WTC11 (cell line): ENCODE measurements at regions of chr20 and their contacts with region 1.

Region 1: GRCh38 chr20:21235484-21236445 is 67.4 kb upstream of the XRN2 start:
- DNase-seq: peak; percentile 76
- ATAC-seq: peak; percentile 82
- H3K4me3 Mint-ChIP-seq: peak overlapping the region; percentile 54
- H3K27ac Mint-ChIP-seq: no peak overlapping the region; the same call in 1 of the 2 replicates
- H3K4me1 Mint-ChIP-seq: peaks cover 33% of the 10 kb centered on the region
- H3K27me3 Mint-ChIP-seq: no peaks in the 10 kb centered on the region
- CTCF ChIP-seq: peak; percentile 93

Region 2: GRCh38 chr20:20843982-20844381 is 391.8 kb before region 1 on chr20:
- CTCF ChIA-PET with region 1: interaction called, 15 read pairs
- POLR2A ChIA-PET with region 1: no interaction called
- DNase-seq: peak; percentile 58
- ATAC-seq: peak; percentile 98
- H3K4me3 Mint-ChIP-seq: no peak overlapping the region
- H3K27ac Mint-ChIP-seq: no peak overlapping the region
- H3K4me1 Mint-ChIP-seq: no peaks in the 10 kb centered on the region
- H3K27me3 Mint-ChIP-seq: no peaks in the 10 kb centered on the region; the same call in none of the 2 replicates
- CTCF ChIP-seq: no peak

Region 3: GRCh38 chr20:21048841-21049273 is 186.9 kb before region 1 on chr20:
- CTCF ChIA-PET with region 1: interaction called, 11 read pairs
- POLR2A ChIA-PET with region 1: no interaction called
- DNase-seq: peak; percentile 88
- ATAC-seq: peak; percentile 88
- H3K4me3 Mint-ChIP-seq: no peak overlapping the region
- H3K27ac Mint-ChIP-seq: no peak overlapping the region
- H3K4me1 Mint-ChIP-seq: peaks cover 18% of the 10 kb centered on the region
- H3K27me3 Mint-ChIP-seq: no peaks in the 10 kb centered on the region
- CTCF ChIP-seq: peak; percentile 85

Region 4: GRCh38 chr20:21189761-21190523 is 45.8 kb before region 1 on chr20:
- CTCF ChIA-PET with region 1: interaction called, 24 read pairs
- POLR2A ChIA-PET with region 1: interaction called, 6 read pairs
- DNase-seq: peak; percentile 51
- ATAC-seq: peak; percentile 84
- H3K4me3 Mint-ChIP-seq: peak overlapping the region; percentile 66
- H3K27ac Mint-ChIP-seq: peak overlapping the region; percentile 99
- H3K4me1 Mint-ChIP-seq: peaks cover 72% of the 10 kb centered on the region
- H3K27me3 Mint-ChIP-seq: no peaks in the 10 kb centered on the region
- CTCF ChIP-seq: no peak

Region 5: GRCh38 chr20:21246161-21246560 is 10.4 kb after region 1 on chr20:
- CTCF ChIA-PET with region 1: interaction called, 22 read pairs
- POLR2A ChIA-PET with region 1: interaction called, 3 read pairs
- DNase-seq: no peak
- ATAC-seq: no peak
- H3K4me3 Mint-ChIP-seq: no peak overlapping the region
- H3K27ac Mint-ChIP-seq: no peak overlapping the region
- H3K4me1 Mint-ChIP-seq: peaks cover 20% of the 10 kb centered on the region
- H3K27me3 Mint-ChIP-seq: no peaks in the 10 kb centered on the region
- CTCF ChIP-seq: no peak

Region 6: DNA sequence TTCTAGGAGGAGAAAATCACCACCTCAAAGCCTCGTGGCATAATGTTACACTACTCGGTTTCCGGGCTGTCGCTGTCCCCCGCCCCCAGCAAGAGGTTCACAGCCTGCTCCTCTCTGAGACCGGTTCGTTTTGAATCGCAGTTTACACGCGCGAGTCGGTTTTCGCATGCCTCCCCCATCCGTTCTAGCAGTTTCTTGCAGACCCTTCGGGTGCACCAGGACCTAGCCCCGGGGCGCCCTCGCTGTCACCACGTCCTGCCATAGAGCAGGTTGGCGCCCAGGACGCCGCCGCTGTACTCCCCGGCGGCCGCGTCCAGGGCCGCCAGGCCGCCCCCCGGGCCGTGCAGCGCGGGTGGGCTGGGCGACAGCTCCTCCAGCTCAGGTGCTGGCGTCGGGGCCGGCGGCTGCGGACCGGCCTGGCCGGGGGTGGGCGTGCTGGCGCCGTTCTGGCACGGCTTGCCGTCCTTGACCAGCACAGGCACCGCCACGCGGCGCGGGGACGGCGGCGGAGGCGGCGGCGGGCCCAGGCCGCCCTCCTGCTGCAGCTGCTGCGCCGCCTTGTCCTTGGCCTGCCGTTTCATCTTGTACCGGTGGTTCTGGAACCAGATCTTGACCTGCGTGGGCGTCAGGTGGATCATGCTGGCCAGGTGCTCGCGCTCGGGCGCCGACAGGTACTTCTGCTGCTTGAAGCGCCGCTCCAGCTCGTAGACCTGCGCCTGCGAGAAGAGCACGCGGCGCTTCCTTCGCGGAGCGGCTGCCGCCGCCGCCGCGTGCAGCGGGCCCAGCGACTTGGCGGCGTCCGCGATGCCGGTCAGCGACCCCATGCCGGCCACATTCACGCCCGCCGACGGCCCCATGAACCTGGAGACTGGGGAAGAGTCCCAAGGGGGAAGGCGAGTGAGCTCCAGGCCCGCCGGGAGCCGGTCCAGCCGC is 160.2 kb after region 1 on chr20:
- CTCF ChIA-PET with region 1: interaction called, 12 read pairs
- POLR2A ChIA-PET with region 1: no interaction called
- DNase-seq: peak; percentile 37
- ATAC-seq: peak; percentile 17
- H3K4me3 Mint-ChIP-seq: peak overlapping the region; percentile 60
- H3K27ac Mint-ChIP-seq: no peak overlapping the region
- H3K4me1 Mint-ChIP-seq: peaks cover 31% of the 10 kb centered on the region
- H3K27me3 Mint-ChIP-seq: peaks cover 93% of the 10 kb centered on the region
- CTCF ChIP-seq: no peak

Region 7: GRCh38 chr20:21505161-21505809 is 269.5 kb after region 1 on chr20:
- CTCF ChIA-PET with region 1: interaction called, 75 read pairs
- POLR2A ChIA-PET with region 1: no interaction called
- DNase-seq: peak; percentile 94
- ATAC-seq: peak; percentile 47
- H3K4me3 Mint-ChIP-seq: peak overlapping the region; percentile 56
- H3K27ac Mint-ChIP-seq: no peak overlapping the region
- H3K4me1 Mint-ChIP-seq: peaks cover 37% of the 10 kb centered on the region
- H3K27me3 Mint-ChIP-seq: peaks cover 73% of the 10 kb centered on the region
- CTCF ChIP-seq: peak; percentile 99

Region 8: GRCh38 chr20:21826976-21827375 is 591.2 kb after region 1 on chr20:
- CTCF ChIA-PET with region 1: no interaction called
- POLR2A ChIA-PET with region 1: no interaction called
- DNase-seq: peak; percentile 21
- ATAC-seq: peak; percentile 78
- H3K4me3 Mint-ChIP-seq: no peak overlapping the region
- H3K27ac Mint-ChIP-seq: no peak overlapping the region
- H3K4me1 Mint-ChIP-seq: peaks cover 10% of the 10 kb centered on the region
- H3K27me3 Mint-ChIP-seq: no peaks in the 10 kb centered on the region
- CTCF ChIP-seq: no peak